Activated B cell treated with CpG ODN at 0.5 μM for 24 hours (primary cell): ENCODE measurements at regions of chr18 and their contacts with region 1.

Region 1: DNA sequence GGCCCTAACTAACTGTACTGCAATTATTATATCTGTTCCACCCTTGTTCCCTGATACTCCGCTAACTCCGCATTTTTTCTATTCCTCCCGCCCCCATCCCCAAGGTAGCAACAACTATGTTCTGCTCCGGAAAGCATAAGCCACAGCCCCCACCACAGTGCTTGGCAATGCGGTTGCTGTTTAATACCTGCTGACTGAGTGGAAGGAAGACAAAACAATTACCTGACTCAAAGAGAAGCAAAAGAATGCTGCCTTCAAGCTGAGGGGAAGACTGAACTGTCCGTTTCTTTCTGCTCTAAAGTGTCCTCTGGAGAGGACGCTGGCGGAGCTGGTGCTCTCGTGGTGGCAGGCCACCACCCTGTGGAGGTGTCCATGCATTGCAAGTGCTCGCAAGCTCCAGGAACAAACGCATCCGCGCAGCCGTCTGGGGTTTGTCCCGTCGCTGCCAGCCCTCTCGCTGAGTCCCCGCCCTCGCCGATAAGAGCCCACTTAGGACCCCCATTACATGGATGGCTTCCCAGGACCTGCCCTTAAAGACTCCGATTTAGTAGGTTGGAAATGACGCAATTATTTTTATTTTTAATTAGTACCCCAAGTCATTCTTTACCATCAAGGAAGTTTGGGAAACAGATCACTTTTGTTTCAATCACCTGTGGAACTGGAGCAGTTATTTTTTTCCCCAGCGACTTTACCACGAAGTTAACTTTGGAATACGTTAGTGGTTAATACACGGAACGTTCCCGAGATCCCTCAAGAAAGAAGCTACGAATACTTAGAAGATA is 1.6 kb upstream of the MYL12A start:
- DNase-seq: peak; percentile 65
- ATAC-seq: peak; percentile 62
- H3K4me3 Mint-ChIP-seq: peak overlapping the region; percentile 94
- H3K27ac Mint-ChIP-seq: peak overlapping the region; percentile 99
- H3K4me1 Mint-ChIP-seq: peaks cover 44% of the 10 kb centered on the region
- H3K27me3 Mint-ChIP-seq: no peaks in the 10 kb centered on the region
- CTCF ChIP-seq: peak; percentile 54

Region 2: DNA sequence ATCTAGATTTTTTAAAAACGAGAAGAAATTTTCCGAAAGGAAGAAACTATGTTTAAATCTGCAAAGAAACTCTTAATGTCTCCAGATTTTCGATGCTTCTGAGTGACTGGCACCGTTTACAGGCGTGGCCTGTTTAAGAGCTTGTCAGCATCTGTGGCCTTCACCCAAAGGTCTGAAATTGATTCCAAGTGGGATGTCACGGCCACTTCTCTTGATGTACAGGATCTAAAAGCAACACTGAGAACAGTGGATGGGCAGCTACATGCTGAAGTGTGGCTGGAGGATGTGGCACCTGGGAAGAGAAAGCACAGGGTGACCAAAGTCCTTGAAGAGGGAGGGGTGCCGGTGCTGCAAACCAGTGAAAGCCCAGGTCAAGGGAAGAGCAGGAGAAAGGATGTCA is 371.3 kb before region 1 on chr18:
- CTCF ChIA-PET with region 1: no interaction called
- POLR2A ChIA-PET with region 1: interaction called, 10 read pairs
- intact Hi-C with region 1: no loop called
- DNase-seq: no peak
- ATAC-seq: no peak
- H3K4me3 Mint-ChIP-seq: no peak overlapping the region
- H3K27ac Mint-ChIP-seq: no peak overlapping the region
- H3K4me1 Mint-ChIP-seq: no peaks in the 10 kb centered on the region
- H3K27me3 Mint-ChIP-seq: no peaks in the 10 kb centered on the region
- CTCF ChIP-seq: no peak

Region 3: GRCh38 chr18:2978646-2979045 is 267.4 kb before region 1 on chr18:
- CTCF ChIA-PET with region 1: interaction called, 10 read pairs
- POLR2A ChIA-PET with region 1: interaction called, 41 read pairs
- intact Hi-C with region 1: no loop called
- DNase-seq: no peak
- ATAC-seq: peak; percentile 26
- H3K4me3 Mint-ChIP-seq: peak overlapping the region; percentile 52
- H3K27ac Mint-ChIP-seq: peak overlapping the region; percentile 94
- H3K4me1 Mint-ChIP-seq: peaks cover 77% of the 10 kb centered on the region
- H3K27me3 Mint-ChIP-seq: no peaks in the 10 kb centered on the region
- CTCF ChIP-seq: no peak

Region 4: DNA sequence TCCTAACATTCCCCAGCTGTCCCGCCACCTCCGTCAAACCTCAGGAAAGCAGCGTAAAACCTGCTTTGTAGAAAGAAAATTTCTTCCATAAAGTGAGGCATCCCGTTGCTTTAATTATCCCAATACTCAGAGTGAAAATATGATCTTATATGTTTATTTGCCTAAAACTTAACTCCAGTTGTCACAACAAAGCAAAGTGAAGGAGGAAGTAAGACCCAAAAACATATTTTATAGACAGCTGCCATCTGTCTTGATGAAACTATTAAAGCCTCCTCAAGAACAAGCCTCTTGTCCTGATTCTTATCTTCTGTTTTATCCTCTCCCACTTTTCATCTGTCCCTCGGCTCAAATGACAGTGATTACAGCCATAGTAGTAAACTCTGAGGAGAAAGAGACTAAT is 204.2 kb before region 1 on chr18:
- CTCF ChIA-PET with region 1: no interaction called
- POLR2A ChIA-PET with region 1: no interaction called
- intact Hi-C with region 1: no loop called
- DNase-seq: no peak
- ATAC-seq: no peak
- H3K4me3 Mint-ChIP-seq: no peak overlapping the region
- H3K27ac Mint-ChIP-seq: no peak overlapping the region
- H3K4me1 Mint-ChIP-seq: peaks cover 6% of the 10 kb centered on the region
- H3K27me3 Mint-ChIP-seq: no peaks in the 10 kb centered on the region
- CTCF ChIP-seq: no peak

Region 5: DNA sequence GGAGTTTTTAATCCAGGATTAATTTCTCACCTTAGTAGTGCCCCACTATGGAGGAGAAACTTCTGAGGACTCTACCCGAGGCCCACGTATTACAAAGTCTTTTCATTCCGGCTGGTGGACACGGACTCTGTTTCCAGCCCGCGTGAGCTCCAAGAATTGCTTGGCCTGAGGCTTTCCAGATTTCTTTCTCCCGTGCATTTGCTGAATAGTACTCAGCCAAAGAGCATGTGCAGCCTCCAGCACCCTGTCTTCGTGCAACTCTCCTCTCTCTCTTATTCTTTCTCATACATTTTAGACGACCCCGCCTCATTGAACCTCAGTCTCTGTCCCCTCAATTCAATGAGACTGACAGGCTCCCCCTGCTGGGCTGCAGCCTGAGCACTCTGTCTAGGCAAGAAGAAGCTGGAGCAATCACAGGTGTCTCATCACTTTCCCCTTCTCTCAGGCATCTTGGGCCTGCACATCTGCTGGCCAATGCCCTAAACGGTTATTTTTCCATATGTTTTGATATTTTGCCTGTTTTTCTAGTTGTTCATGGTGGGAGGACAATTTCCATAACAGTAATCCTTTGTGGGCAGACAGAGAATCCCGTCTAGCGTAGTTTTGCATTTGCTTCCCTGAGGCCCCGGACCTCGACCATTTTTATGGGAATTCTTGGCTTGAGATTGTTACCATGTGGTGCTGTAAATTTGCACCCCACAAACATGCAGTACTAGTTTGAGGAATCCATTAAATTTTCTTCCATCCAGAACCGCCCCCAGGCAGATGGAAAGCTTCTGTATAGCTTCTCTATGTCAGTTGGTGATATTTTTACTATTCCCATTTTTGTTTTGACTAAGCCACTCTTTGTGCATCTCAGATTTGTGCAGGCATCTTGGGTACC is 183.0 kb before region 1 on chr18:
- CTCF ChIA-PET with region 1: interaction called, 36 read pairs
- POLR2A ChIA-PET with region 1: interaction called, 6 read pairs
- intact Hi-C with region 1: loop called (anchors 1 kb)
- DNase-seq: peak; percentile 29
- ATAC-seq: peak; percentile 59
- H3K4me3 Mint-ChIP-seq: no peak overlapping the region
- H3K27ac Mint-ChIP-seq: no peak overlapping the region
- H3K4me1 Mint-ChIP-seq: peaks cover 49% of the 10 kb centered on the region
- H3K27me3 Mint-ChIP-seq: no peaks in the 10 kb centered on the region
- CTCF ChIP-seq: no peak

Region 6: GRCh38 chr18:3177902-3178687 is 67.9 kb before region 1 on chr18:
- CTCF ChIA-PET with region 1: interaction called, 62 read pairs
- POLR2A ChIA-PET with region 1: interaction called, 132 read pairs
- intact Hi-C with region 1: loop called (anchors 1 kb)
- DNase-seq: peak; percentile 66
- ATAC-seq: peak; percentile 86
- H3K4me3 Mint-ChIP-seq: peak overlapping the region; percentile 76
- H3K27ac Mint-ChIP-seq: peak overlapping the region; percentile 99
- H3K4me1 Mint-ChIP-seq: peaks cover 32% of the 10 kb centered on the region
- H3K27me3 Mint-ChIP-seq: no peaks in the 10 kb centered on the region
- CTCF ChIP-seq: no peak

Region 7: DNA sequence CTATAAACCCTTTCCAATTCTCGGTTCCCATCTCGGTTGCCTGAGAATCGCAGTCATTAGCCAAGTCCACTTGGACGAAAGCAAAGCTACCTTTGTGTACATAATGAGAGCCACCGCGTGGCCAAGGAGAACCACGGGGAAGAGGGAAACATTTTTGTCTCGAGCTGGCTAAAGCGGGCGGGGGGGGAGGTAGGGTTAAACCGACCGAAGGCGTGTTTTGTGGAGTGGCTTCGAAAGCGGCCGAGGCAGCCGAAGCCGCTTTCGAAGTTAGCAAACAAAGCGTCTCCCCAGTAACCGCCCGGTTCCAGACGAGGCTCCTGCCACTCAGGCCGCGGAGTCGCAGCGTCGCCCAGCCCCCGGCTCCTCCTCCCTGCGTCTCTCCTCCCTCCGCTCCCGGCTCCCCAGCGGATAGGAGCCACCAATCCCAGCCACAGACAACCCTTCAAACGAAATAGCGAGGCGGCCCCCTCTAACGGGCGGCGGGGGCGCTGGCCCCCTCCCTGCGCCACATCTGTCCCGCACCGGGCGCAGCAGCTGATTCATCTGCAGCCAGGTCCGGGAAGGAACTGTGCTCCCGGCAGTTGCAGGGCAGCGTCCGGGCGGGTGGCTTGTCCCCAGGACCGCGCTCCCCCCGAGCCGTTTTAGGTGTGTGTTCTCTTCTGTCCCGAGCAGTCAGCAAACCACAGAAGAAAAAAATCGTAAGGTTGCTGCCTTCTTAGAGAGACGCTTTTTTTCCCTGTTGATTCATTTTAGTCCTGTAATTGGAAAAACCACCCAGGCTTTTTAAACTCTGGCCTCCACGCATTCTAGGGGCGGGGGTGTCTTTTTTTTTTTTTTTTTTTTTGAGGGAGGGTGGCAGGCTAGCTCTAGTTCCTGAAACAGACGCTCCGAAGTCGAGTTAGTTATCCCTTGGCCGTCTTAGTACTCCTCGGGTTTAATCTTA is 202.1 kb after region 1 on chr18:
- CTCF ChIA-PET with region 1: no interaction called
- POLR2A ChIA-PET with region 1: interaction called, 23 read pairs
- intact Hi-C with region 1: loop called (anchors 1 kb)
- DNase-seq: peak; percentile 77
- ATAC-seq: peak; percentile 45
- H3K4me3 Mint-ChIP-seq: peak overlapping the region; percentile 96
- H3K27ac Mint-ChIP-seq: peak overlapping the region; percentile 100
- H3K4me1 Mint-ChIP-seq: peaks cover 34% of the 10 kb centered on the region
- H3K27me3 Mint-ChIP-seq: no peaks in the 10 kb centered on the region
- CTCF ChIP-seq: no peak